Activated T-helper 1 cell treated with anti-CD3 and anti-CD28 coated beads, Interleukin-12 subunit alpha, Interleukin-12 subunit beta, Interleukin-2, Interleukin-4 antibody, amounts not matched to agents 30 ng/mL and 10 ng/mL and 1 ng/mL, durations not matched to agents 14 hours and 24 hours and 36 hours (primary cell): ENCODE measurements at regions of chr2 and their contacts with region 1.

Region 1: DNA sequence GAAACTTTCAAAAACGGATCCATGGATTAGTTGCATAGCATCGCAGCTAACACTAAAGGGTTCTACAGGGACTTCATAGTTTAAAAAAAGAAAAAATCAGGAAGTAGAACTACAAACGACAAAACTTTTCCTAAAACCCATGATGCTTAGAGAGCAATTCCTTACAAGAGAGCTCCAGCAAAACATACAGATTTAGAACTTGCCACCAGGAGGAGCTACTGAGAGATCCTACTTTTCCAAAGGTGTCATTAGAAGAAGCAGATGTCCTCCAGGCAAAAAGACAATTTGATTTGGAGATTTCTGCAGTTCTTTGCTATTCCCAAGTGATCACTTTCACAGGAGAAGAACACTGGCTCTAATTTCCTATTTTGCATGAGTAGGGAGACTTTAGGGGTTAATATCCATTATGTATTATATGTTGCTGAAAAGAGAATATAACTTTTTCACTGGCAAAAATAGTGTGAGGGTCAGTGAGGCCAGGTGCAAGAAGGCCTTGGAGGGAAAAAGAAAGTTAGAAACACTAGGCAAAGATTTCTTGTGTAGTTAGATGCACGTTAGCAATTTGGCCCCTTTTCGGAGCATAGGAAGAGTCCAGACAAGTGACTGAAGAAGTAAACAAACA is 436.2 kb downstream of the SUCLG1 start:
- DNase-seq: no peak
- H3K4me3 Mint-ChIP-seq: no peak overlapping the region
- H3K27ac Mint-ChIP-seq: no peak overlapping the region
- H3K4me1 Mint-ChIP-seq: no peaks in the 10 kb centered on the region
- H3K27me3 Mint-ChIP-seq: no peaks in the 10 kb centered on the region

Region 2: DNA sequence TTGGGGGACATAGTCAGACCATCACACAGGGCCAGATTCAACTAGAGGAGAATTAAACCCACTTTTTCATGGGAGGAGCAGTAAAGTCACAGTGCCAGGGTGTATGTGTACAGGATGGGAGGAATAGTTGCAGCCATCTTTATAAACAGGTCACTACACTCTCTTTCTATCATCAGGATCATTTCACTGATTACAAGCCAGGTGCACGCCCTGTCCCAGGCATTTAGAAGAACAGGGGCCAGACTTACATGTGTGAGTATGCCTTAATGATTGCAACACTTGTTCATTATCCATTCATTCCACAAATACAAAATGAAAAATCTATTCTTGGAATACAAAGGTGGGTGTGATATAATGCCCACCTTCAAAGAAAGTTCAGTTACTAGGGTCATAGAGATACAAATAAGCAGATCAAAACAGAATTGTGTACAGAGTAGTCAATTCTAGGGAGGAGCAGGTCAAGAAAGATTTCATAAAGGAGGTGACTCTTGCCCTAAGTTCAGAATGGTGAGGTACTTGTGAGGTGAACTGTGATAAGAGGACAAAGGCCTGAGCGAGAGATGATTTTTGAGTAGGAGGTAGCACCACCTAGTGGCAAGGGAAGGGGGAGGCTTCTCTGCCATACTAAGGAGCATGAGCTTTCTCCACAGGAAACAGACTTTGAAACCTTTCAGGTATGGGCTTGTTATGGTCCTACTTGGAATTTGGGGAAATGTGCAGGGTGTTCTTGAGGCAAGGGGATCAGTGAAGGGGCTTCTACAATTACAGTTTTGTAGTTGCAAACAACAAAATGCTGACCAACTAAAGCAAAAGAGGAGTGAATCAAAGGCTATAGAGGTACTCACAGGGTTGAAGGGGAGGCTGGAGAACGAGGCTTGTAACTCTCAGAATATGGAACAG is 279.8 kb after region 1 on chr2:
- intact Hi-C with region 1: loop called (anchors 1 kb)
- DNase-seq: peak; percentile 12
- H3K4me3 Mint-ChIP-seq: no peak overlapping the region
- H3K27ac Mint-ChIP-seq: no peak overlapping the region
- H3K4me1 Mint-ChIP-seq: no peaks in the 10 kb centered on the region
- H3K27me3 Mint-ChIP-seq: peaks cover 7% of the 10 kb centered on the region

Region 3: GRCh38 chr2:84314901-84315330 is 292.0 kb after region 1 on chr2:
- intact Hi-C with region 1: loop called (anchors 1 kb)
- DNase-seq: peak; percentile 50
- H3K4me3 Mint-ChIP-seq: no peak overlapping the region
- H3K27ac Mint-ChIP-seq: no peak overlapping the region
- H3K4me1 Mint-ChIP-seq: no peaks in the 10 kb centered on the region
- H3K27me3 Mint-ChIP-seq: peaks cover 14% of the 10 kb centered on the region